ENCODE measurements at regions of chr17 and their contacts with region 1.

Region 1: DNA sequence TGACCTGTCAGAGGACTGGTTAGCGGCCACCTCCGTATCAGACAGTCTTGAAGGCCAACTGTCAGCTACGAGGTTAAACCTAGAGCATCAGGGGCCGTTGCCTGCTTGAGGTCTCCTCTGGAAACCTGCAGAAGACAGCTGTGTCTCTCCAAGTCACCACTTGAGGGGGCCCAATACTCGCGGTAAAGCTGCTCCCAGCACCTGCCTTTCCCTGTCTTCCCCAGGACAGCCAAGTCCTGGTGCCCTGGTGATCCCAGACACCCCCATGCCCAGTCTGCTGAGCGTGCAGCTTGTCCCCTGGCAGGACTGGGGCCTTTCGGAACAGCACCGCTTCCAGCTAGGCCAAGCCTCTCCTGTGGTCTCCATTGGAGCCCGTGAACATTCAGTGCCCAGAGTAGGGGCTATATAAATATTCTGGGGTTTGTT is 80.1 kb downstream of the DNAH17 start:
- DNase-seq: peak; percentile 85
- ATAC-seq: peak; percentile 84
- H3K4me3 Mint-ChIP-seq: no peak overlapping the region
- H3K27ac Mint-ChIP-seq: no peak overlapping the region
- H3K4me1 Mint-ChIP-seq: peaks cover 16% of the 10 kb centered on the region
- H3K27me3 Mint-ChIP-seq: peaks cover 14% of the 10 kb centered on the region
- CTCF ChIP-seq: peak; percentile 61; the same call in 1 of the 2 replicates

Region 2: DNA sequence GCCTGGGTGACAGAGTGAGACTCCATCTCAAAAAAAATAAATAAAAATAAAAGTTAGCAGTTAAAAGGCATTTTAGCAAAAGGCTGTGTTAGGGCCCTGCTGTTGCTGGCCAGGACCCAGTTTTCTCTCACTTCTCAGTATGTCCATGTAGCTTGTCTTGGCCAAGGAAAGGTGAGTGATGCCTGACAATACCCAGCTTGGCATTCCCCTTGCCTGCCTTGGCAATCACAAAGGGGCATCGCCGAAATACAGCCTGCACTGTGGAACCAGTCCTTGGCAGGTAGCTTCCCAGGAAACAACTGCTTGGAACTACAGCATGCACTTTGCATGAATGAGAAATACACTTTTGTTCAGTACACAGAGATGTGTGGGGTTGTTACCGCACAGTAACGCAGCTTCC is 18.4 kb after region 1 on chr17:
- CTCF ChIA-PET with region 1: interaction called, 11 read pairs
- POLR2A ChIA-PET with region 1: interaction called, 3 read pairs
- DNase-seq: no peak
- ATAC-seq: no peak
- H3K4me3 Mint-ChIP-seq: no peak overlapping the region
- H3K27ac Mint-ChIP-seq: no peak overlapping the region
- H3K4me1 Mint-ChIP-seq: peaks cover 3% of the 10 kb centered on the region; the same call in 1 of the 2 replicates
- H3K27me3 Mint-ChIP-seq: no peaks in the 10 kb centered on the region; the same call in 1 of the 2 replicates
- CTCF ChIP-seq: no peak

Region 3: DNA sequence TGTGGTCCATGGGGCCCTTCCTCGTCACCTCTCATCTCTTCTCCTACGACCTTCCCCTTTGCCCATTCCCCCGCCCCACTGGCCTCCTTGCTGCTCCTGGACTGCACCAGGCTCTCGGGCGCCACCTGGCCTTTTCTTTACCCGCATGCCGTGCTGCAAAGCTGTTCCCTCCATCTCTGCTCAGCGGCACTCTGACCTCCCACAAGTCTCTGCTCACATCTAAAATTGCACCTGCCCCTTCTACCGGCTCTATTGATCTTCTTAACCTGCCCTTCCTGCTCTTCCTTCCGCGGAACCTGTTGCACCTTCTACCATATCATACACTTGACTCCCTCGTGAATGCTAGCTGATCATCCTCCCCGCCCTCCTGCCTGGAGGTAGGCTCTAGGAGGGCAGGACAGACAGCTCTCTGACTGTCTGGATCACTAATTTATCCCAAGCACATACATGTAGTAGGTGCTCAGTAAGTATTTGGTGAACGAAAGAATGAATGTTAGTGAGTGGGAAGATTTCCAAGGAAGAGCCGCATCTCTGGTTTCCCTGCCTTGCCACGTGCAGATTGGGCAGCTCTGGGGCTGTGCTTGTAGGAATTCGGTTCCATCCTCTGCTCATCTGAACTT is 62.7 kb after region 1 on chr17:
- CTCF ChIA-PET with region 1: interaction called, 22 read pairs
- POLR2A ChIA-PET with region 1: interaction called, 3 read pairs
- DNase-seq: peak; percentile 78
- ATAC-seq: peak; percentile 97
- H3K4me3 Mint-ChIP-seq: no peak overlapping the region
- H3K27ac Mint-ChIP-seq: no peak overlapping the region
- H3K4me1 Mint-ChIP-seq: no peaks in the 10 kb centered on the region
- H3K27me3 Mint-ChIP-seq: no peaks in the 10 kb centered on the region
- CTCF ChIP-seq: peak; percentile 23; the same call in 1 of the 2 replicates

Region 4: GRCh38 chr17:78611607-78612006 is 114.5 kb after region 1 on chr17:
- CTCF ChIA-PET with region 1: interaction called, 36 read pairs
- POLR2A ChIA-PET with region 1: no interaction called
- DNase-seq: no peak
- ATAC-seq: no peak
- H3K4me3 Mint-ChIP-seq: no peak overlapping the region
- H3K27ac Mint-ChIP-seq: no peak overlapping the region
- H3K4me1 Mint-ChIP-seq: peaks cover 21% of the 10 kb centered on the region
- H3K27me3 Mint-ChIP-seq: peaks cover 63% of the 10 kb centered on the region
- CTCF ChIP-seq: no peak

Region 5: GRCh38 chr17:78708510-78708973 is 211.4 kb after region 1 on chr17:
- CTCF ChIA-PET with region 1: interaction called, 60 read pairs
- POLR2A ChIA-PET with region 1: no interaction called
- DNase-seq: peak; percentile 76
- ATAC-seq: peak; percentile 99
- H3K4me3 Mint-ChIP-seq: no peak overlapping the region
- H3K27ac Mint-ChIP-seq: no peak overlapping the region
- H3K4me1 Mint-ChIP-seq: peaks cover 3% of the 10 kb centered on the region; the same call in 1 of the 2 replicates
- H3K27me3 Mint-ChIP-seq: no peaks in the 10 kb centered on the region
- CTCF ChIP-seq: peak; percentile 66

Region 6: DNA sequence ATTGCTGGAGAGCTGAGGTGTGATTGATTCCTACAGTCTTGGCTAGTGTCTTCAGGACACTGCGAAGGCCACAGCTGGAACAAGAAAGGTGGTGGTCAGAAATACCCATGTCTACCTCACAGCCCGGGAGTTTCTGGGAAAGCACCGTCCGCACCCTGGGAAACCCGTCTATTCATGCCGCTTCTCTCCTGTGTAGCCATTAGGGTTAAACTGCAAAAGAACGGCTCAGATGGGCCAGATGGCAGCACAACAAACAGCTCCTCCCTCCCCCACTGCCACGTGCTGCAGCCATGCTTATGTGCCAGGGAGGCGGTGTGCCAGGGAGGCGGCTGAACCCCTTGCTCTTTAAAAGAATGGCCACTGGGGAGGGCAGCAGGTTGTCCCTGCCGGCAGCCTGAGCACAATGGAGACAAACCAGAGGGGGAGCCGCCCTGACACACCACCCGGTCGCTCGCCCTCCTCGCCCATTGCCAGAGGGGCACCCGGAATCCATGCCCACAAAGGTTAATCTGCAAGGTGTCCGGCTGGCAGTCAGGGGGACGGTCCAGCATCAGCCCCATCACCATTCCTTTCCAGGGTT is 219.8 kb after region 1 on chr17:
- CTCF ChIA-PET with region 1: interaction called, 11 read pairs
- POLR2A ChIA-PET with region 1: no interaction called
- DNase-seq: no peak
- ATAC-seq: peak; percentile 41
- H3K4me3 Mint-ChIP-seq: peak overlapping the region; percentile 58
- H3K27ac Mint-ChIP-seq: no peak overlapping the region
- H3K4me1 Mint-ChIP-seq: peaks cover 43% of the 10 kb centered on the region
- H3K27me3 Mint-ChIP-seq: peaks cover 3% of the 10 kb centered on the region; the same call in 1 of the 2 replicates
- CTCF ChIP-seq: no peak

Region 7: DNA sequence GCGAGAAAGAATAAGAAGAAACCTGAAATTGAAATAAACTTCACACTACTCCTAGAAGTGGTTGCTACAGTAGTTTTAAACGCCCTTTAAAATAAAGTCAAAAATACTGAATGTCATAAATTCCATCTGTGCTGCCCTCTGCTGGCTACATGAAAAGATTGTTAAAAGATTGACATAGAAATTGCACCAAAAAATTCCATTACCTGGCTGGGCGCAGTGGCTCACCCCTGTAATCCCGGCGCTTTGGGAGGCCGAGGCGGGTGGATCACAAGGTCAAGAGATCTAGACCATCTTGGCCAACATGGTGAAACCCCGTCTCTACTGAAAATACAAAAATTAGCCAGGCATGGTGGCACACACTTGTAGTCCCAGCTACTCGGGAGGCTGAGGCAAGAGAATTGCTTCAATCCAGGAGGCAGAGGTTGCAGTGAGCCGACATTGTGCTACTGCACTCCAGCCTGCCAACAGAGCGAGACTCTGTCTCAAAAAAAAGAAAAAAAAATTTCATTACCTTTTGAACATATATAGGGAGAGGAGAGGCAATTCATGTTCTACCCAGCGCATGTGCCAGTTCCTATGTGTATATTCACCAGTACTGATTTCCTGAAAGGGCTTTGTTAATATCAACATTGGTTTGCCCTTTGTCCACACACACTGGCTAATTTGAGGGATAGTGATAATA is 248.4 kb after region 1 on chr17:
- CTCF ChIA-PET with region 1: interaction called, 10 read pairs
- POLR2A ChIA-PET with region 1: no interaction called
- DNase-seq: peak; percentile 28
- ATAC-seq: no peak; the same call in 1 of the 2 replicates
- H3K4me3 Mint-ChIP-seq: no peak overlapping the region
- H3K27ac Mint-ChIP-seq: no peak overlapping the region
- H3K4me1 Mint-ChIP-seq: peaks cover 33% of the 10 kb centered on the region
- H3K27me3 Mint-ChIP-seq: no peaks in the 10 kb centered on the region
- CTCF ChIP-seq: peak; percentile 35; the same call in 1 of the 2 replicates